GM10248 (cell line): ENCODE measurements at regions of chr5 and their contacts with region 1.

Region 1: DNA sequence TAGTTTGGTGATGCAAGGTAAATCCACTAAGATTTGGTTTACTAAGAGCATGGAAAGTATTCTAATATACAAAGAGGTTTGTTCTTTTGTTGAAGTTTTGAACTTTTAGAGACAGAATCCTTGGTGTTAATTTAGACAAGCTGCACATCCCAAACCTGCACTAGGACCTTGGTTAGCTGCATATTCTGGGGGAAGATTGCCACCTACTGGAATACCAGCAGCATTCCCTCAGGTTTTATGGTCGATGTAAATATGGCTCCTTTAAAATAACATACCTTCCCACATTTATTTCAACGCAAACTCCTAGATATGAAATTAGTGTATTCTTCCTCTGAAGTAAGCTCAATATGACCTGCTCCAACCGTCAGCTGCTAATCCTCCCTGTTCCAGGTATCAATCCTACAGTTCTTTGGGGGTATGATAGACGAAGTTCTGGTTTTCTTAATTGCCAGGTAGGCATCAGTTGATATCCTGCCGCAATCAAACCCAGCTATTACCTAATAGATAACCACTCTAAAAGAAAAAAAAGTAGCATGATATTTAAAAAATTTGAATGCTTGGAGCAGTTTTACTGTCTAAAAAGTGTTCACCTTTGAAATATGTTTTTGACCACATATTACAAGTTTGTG is 624.1 kb downstream of the ISL1 start:
- DNase-seq: no peak
- CTCF ChIP-seq: peak; percentile 65

Region 2: DNA sequence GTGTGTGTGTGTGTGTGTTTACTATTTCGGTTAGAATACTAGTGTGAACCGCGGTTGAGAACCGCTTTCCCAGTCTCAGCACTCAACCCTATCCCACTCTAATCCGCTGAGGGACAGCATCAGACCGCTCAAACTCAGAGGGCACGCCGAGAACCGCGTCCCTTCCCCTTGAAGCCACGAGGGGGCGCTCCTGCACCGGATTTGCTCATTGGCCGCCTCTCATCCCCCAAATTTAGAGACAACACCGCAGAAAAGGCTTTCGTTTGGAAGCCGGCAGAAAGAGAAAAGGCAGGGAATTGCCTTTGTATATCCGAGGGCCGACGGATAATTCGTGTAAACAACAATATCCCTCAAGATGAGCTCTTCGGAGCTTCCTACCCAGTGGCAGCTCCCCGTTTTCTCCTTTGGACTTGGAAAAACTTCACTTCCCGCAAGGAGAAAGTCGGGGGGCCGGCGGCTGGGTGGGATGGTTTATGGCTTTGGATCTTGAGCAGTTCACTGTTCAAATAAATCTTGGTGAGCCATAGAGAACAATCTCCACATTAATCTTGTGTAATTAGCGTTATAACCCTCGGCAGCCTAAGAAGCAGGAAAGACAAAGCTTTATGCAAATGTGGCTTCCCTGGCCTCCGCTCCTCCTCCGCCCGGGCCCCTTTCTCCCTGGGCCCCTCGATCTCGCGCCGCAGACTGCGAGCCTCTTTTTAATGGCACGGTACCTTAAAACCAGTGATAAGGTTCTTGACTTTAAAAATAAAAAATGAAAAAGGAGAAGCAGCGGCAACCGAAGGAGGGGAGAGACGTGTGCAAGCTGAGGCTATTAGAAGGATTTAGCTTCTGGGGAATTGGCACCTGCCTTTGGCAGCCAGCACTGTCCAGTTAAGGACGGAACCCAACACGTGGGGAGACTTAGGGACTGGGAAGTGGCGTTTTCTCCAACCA is 1044.1 kb before region 1 on chr5:
- CTCF ChIA-PET with region 1: interaction called, 14 read pairs
- POLR2A ChIA-PET with region 1: no interaction called
- DNase-seq: peak; percentile 85
- CTCF ChIP-seq: peak; percentile 98

Region 3: DNA sequence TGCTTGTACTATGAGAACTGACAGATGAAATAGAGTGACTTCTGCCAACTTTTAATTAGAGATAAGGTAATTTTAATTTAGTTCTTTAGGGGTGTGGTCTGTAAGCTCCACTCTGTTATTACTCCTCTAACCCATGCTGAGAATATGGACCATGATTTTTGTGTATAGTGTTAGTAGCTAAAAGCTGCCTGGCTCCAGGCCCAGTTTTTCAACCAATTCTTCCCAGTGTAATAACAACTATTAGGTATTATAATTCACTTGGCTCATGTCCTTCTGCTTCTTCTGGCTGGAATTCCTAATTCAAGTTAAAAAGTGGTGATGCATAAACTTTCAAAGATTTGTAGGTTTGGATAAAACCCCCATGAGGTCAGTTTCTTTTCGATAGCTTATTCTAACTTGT is 407.8 kb before region 1 on chr5:
- CTCF ChIA-PET with region 1: no interaction called
- POLR2A ChIA-PET with region 1: no interaction called
- DNase-seq: no peak
- CTCF ChIP-seq: no peak